ENCODE measurements at regions of chr17 and their contacts with region 1.

Region 1: GRCh38 chr17:50865984-50866774 is at the start of gene TOB1:
- DNase-seq: peak; percentile 98 to 100 (median 99)
- ATAC-seq: peak; percentile 72 to 81 (median 76)
- H3K4me3 ChIP-seq: peak within 1 kb of the TSS; percentile 87 to 99 (median 96)
- H3K27ac ChIP-seq: peak within 1 kb of the TSS; percentile 99 to 100 (median 100)
- H3K4me1 ChIP-seq: peaks cover 14 to 32% (median 15%) of the 10 kb centered on the region in 3 donors
- H3K27me3 ChIP-seq: no peaks in the 10 kb centered on the region
- CTCF ChIP-seq: no peak
- total RNA-seq, gene TOB1: 65.9 to 157 (median 99.0) TPM

Region 2: DNA sequence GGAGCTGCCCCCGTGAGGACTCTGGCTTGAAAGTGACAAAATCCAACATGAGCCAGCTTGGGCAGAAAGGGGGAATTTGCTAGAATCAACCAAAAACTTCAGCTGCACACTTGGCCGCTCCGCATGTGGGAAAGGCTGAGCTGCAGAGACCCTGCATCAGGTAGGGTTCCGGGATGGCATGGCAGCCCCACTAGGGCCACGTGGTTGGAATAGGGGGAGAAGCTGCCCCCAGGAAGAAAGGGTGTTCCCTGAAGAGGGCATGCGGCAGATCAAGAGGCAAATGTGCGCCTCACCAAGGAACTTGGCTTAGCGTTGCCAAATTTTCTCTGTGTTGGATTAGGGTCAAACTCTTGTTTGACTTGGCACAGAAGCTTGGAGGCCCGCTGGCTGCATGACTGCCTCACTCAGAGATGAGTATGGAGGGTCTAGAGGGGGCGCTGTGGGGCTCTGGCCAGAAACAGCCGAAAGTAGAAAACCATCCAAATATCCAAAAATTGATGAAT is 60.0 kb before region 1 on chr17:
- intact Hi-C with region 1: no loop called
- DNase-seq: peak; percentile 60 to 75 (median 63)
- ATAC-seq: peak; percentile 77 to 91 (median 90)
- H3K4me3 ChIP-seq: no peak overlapping the region
- H3K27ac ChIP-seq: peak overlapping the region in 2 of 4 donors; percentile 28
- H3K4me1 ChIP-seq: peaks cover 10 to 14% (median 12%) of the 10 kb centered on the region in 3 donors
- H3K27me3 ChIP-seq: no peaks in the 10 kb centered on the region
- CTCF ChIP-seq: no peak

Region 3: GRCh38 chr17:50904521-50905459 is 38.6 kb after region 1 on chr17:
- intact Hi-C with region 1: loop called in 1 of 3 experiments (anchors 5 kb)
- DNase-seq: peak; percentile 84 to 94 (median 84)
- ATAC-seq: peak; percentile 47 to 64 (median 58)
- H3K4me3 ChIP-seq: peak overlapping the region in 2 of 4 donors; percentile 11 to 15
- H3K27ac ChIP-seq: peak overlapping the region; percentile 90 to 97 (median 94)
- H3K4me1 ChIP-seq: peaks cover 68 to 73% (median 73%) of the 10 kb centered on the region in 3 donors
- H3K27me3 ChIP-seq: no peaks in the 10 kb centered on the region
- CTCF ChIP-seq: no peak

Region 4: DNA sequence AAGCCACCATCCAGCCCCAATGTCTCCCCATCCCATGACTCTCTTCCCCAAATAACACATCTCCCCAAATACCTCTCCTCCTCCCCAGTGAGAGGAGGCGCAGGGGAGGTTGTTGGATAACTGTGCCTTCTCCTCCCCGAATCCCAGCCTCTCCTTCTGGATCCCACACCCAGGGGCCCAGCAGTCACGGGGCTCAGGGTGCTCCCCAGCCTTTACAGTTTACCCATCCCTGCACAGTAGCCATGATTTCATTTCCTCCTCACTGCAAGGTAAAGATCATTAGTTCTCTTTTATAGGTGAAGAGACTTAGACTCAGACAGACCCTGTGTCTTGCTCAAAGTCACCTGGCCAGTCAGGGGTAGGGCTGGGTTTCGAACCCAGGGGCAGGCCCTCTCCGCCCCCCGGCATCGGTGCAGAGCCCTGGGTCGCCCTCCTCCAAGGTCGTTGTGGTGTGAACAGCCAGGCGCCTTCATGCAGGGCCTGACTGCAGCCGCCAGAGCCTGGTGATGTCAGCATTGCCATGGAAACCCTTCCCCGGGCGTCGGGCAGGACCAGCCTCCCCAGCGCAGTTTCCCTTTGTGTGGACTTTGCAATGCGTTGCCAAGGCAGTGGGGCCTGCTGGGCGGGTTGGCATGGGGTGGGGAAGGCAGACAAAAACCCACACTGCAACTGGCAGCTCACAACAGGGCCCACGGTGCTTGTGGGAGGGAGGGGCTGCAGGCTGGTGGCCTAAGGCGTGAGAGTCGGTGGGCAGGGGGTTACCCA is 53.3 kb after region 1 on chr17:
- intact Hi-C with region 1: loop called in 1 of 3 experiments (anchors 10 kb)
- DNase-seq: peak; percentile 88 to 99 (median 97)
- ATAC-seq: peak; percentile 81 to 92 (median 84)
- H3K4me3 ChIP-seq: no peak overlapping the region
- H3K27ac ChIP-seq: peak overlapping the region; percentile 87 to 90 (median 88)
- H3K4me1 ChIP-seq: peaks cover 52 to 57% (median 53%) of the 10 kb centered on the region in 3 donors
- H3K27me3 ChIP-seq: no peaks in the 10 kb centered on the region
- CTCF ChIP-seq: no peak

Region 5: DNA sequence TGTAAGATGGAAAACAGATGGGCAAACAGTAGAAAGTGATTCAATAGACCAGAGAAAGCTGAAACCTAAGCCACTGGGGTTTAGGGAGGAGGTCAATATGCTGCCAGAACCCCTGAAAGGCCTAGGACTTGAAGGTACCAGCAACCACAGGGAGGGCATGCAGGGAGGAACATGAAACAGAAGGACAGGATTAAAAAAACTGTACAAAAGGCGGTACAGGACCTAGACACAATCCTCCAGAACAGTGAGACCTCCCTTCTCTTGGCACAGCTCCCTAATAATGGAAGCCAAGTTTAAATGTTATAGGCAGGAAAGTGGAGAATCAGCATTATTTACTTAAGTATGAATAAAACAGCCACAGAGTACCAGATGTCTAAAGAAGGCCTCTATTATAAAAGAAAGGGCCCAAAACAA is 149.0 kb after region 1 on chr17:
- intact Hi-C with region 1: no loop called
- DNase-seq: no peak
- ATAC-seq: no peak
- H3K4me3 ChIP-seq: no peak overlapping the region
- H3K27ac ChIP-seq: no peak overlapping the region
- H3K4me1 ChIP-seq: no peaks in the 10 kb centered on the region
- H3K27me3 ChIP-seq: no peaks in the 10 kb centered on the region
- CTCF ChIP-seq: no peak